Transverse colon (tissue), 4 donors: ENCODE measurements at regions of chrX and their contacts with region 1.

Region 1: DNA sequence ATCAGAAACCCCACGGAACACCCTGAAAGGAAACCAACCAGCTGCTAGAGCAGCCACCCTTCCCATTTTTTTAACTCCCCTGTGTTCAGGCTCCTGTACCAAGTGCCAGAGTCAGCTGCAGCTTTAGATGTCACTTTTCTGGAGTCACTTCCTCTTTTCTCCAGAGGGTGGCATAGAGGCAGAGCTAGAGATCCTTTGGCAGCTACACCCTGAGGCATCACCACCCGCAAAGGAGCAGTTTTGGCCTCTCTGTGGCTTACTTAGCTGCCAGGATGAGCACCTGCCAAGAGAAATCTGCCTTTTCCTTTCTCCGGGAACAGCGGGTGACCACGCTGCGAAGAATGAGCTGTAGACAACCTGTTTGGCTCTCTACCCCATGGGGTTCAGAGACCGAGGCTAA is 58.0 kb upstream of the CHRDL1 start:
- DNase-seq: no peak
- H3K4me3 ChIP-seq: no peak overlapping the region
- H3K27ac ChIP-seq: no peak overlapping the region
- H3K4me1 ChIP-seq: no peaks in the 10 kb centered on the region
- H3K27me3 ChIP-seq: no peaks in the 10 kb centered on the region
- CTCF ChIP-seq: peak in 3 of 5 experiments; percentile 9 to 21 (median 21)
- EP300 ChIP-seq: no peak
- POLR2A ChIP-seq: no peak

Region 2: GRCh38 chrX:110444996-110445395 is 408.6 kb before region 1 on chrX:
- in situ Hi-C with region 1: loop called (anchors 5 to 10 kb)
- intact Hi-C with region 1: loop called (anchors 1 kb)
- DNase-seq: no peak
- H3K4me3 ChIP-seq: no peak overlapping the region
- H3K27ac ChIP-seq: no peak overlapping the region
- H3K4me1 ChIP-seq: no peaks in the 10 kb centered on the region
- H3K27me3 ChIP-seq: no peaks in the 10 kb centered on the region
- CTCF ChIP-seq: no peak
- EP300 ChIP-seq: no peak
- POLR2A ChIP-seq: no peak

Region 3: DNA sequence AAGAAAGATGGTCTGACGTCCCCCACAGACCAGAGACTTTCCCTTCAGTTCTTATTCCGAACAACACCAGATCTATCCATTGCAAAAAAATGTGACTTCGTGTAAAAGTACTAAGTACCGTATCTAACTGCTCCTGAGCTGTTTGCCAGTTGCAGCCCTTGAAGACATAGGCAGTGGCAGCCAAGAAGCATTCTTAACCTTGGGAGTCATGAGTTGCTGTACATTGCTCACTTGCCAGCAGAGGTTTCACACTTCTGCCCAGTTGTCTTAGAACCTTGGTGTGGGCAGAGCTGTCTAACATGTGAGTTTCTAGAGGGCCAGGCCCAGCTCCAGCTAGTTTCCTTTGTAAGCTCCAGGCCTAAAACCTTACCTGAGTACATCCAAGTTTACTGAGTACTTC is 47.5 kb before region 1 on chrX:
- in situ Hi-C with region 1: no loop called
- intact Hi-C with region 1: no loop called
- DNase-seq: no peak
- H3K4me3 ChIP-seq: no peak overlapping the region
- H3K27ac ChIP-seq: no peak overlapping the region
- H3K4me1 ChIP-seq: no peaks in the 10 kb centered on the region
- H3K27me3 ChIP-seq: no peaks in the 10 kb centered on the region
- CTCF ChIP-seq: no peak
- EP300 ChIP-seq: no peak
- POLR2A ChIP-seq: no peak

Region 4: GRCh38 chrX:110871839-110872238 is 18.2 kb after region 1 on chrX:
- in situ Hi-C with region 1: no loop called
- intact Hi-C with region 1: loop called (anchors 2 kb)
- DNase-seq: no peak
- H3K4me3 ChIP-seq: no peak overlapping the region
- H3K27ac ChIP-seq: no peak overlapping the region
- H3K4me1 ChIP-seq: no peaks in the 10 kb centered on the region
- H3K27me3 ChIP-seq: no peaks in the 10 kb centered on the region
- CTCF ChIP-seq: no peak
- EP300 ChIP-seq: no peak
- POLR2A ChIP-seq: no peak

Region 5: GRCh38 chrX:111600341-111600740 is 746.7 kb after region 1 on chrX:
- in situ Hi-C with region 1: no loop called
- intact Hi-C with region 1: no loop called
- DNase-seq: no peak
- H3K4me3 ChIP-seq: no peak overlapping the region
- H3K27ac ChIP-seq: no peak overlapping the region
- H3K4me1 ChIP-seq: no peaks in the 10 kb centered on the region
- H3K27me3 ChIP-seq: no peaks in the 10 kb centered on the region
- CTCF ChIP-seq: no peak
- EP300 ChIP-seq: no peak
- POLR2A ChIP-seq: no peak

Region 6: GRCh38 chrX:111811831-111812230 is 958.2 kb after region 1 on chrX:
- in situ Hi-C with region 1: no loop called
- intact Hi-C with region 1: no loop called
- DNase-seq: no peak
- H3K4me3 ChIP-seq: no peak overlapping the region
- H3K27ac ChIP-seq: no peak overlapping the region
- H3K4me1 ChIP-seq: no peaks in the 10 kb centered on the region
- H3K27me3 ChIP-seq: no peaks in the 10 kb centered on the region
- CTCF ChIP-seq: no peak
- EP300 ChIP-seq: no peak
- POLR2A ChIP-seq: no peak